ENCODE measurements at regions of chr1 and their contacts with region 1.

Region 1: DNA sequence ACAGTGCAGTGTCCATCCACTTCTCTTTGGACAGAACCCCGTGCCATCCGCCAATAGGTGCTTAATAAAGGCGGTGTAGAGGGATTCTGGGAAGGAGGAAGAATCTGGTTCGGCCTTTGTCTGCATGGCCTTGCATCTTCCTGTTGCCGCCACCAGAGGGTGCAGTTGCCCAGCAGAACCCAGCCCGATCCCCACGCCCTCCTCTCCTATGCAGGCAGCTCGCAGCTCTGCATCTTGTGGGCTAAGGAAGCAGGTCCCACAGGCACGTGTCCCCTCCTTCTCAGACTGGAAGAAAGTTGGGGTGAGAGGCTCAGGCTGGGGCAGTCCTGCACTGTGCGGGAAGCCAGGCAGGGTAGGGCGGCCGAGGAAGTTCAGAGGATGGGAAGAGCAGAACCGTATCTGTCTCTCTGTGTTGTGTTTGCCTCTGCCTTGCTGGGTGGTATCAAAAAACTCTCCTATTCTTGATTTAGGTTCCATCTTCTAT is 20.8 kb downstream of the NAV1 start:
- DNase-seq: peak; percentile 85
- H3K4me3 ChIP-seq: no peak overlapping the region; a peak in 1 of 4 replicates
- H3K27ac ChIP-seq: peak overlapping the region; percentile 51 to 95
- H3K4me1 ChIP-seq: peaks cover 60 to 71% of the 10 kb centered on the region in 2 experiments
- H3K27me3 ChIP-seq: no peaks in the 10 kb centered on the region
- CTCF ChIP-seq: peak; percentile 91
- EP300 ChIP-seq: no peak
- RAD21 ChIP-seq: peak; percentile 99

Region 2: DNA sequence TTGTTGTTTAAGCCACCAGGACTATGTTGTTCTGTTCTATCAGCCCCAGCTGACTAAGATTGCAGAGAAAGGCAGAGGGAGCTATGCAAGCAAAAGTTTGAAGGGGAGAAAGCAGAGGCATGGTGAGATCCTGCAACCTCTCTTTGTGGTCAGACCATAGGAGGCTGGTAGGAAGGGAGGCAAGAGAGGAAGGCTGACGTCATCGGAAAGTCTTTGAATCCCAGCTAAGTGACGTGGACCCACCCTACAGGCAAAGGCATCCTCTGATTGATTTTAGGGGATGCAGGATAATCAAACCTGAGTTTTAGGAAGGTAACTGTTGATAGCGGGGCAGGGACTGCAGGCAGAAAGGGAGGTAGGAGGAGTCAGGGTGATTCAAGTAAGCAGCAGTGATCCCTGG is 114.9 kb before region 1 on chr1:
- CTCF ChIA-PET with region 1: no interaction called
- POLR2A ChIA-PET with region 1: no interaction called
- DNase-seq: no peak
- H3K4me3 ChIP-seq: no peak overlapping the region
- H3K27ac ChIP-seq: no peak overlapping the region
- H3K4me1 ChIP-seq: peaks cover 0 to 7% of the 10 kb centered on the region in 2 experiments; a peak in 2 of 4 replicates
- H3K27me3 ChIP-seq: no peaks in the 10 kb centered on the region
- CTCF ChIP-seq: no peak
- EP300 ChIP-seq: no peak
- RAD21 ChIP-seq: no peak

Region 3: GRCh38 chr1:201530741-201531531 is 28.8 kb before region 1 on chr1:
- CTCF ChIA-PET with region 1: interaction called, 176 read pairs
- POLR2A ChIA-PET with region 1: interaction called, 3 read pairs
- DNase-seq: peak; percentile 89
- H3K4me3 ChIP-seq: no peak overlapping the region
- H3K27ac ChIP-seq: peak overlapping the region in 1 of 2 experiments; percentile 62; a peak in 2 of 4 replicates
- H3K4me1 ChIP-seq: peaks cover 11 to 36% of the 10 kb centered on the region in 2 experiments; a peak in 3 of 4 replicates
- H3K27me3 ChIP-seq: no peaks in the 10 kb centered on the region
- CTCF ChIP-seq: peak; percentile 90
- EP300 ChIP-seq: no peak
- RAD21 ChIP-seq: peak; percentile 93

Region 4: DNA sequence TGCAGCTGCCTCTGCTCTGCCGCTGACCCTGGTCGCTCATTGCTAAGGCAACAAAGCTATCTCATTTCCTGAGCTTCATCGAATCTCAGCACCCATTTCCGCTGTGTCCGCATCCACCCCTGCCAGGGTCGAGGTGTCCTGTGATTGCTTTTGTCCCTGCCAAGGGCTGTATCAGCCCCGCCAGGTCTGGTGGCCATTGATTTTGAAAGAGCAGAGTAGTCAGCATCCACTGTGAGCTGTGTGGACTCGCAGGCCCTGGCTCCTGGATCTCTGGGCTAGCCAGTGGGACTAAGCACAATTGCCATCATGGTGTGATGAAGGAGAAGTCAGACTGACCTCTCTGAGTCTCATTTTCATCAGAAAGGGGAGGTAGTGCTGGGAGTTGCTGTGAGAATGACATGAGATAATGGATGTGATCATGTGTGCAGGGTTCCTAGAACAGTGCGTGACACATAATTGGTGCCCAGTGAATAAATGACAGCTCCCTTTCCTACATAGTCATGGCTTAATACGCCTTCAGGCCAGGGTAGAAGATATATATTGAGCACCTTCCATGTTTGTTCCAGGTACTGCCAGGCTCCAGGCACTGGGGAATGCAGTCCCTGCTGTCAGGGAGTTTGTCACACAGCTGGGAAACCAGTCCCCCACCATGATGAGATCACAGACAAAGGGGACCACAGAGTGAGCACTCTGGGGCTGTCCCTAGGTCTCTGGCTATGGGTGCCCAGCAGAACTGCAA is 11.3 kb after region 1 on chr1:
- CTCF ChIA-PET with region 1: interaction called, 15 read pairs
- POLR2A ChIA-PET with region 1: no interaction called
- DNase-seq: peak; percentile 58
- H3K4me3 ChIP-seq: no peak overlapping the region
- H3K27ac ChIP-seq: peak overlapping the region; percentile 5 to 72; a peak in 3 of 4 replicates
- H3K4me1 ChIP-seq: peaks cover 0 to 34% of the 10 kb centered on the region in 2 experiments; a peak in 2 of 4 replicates
- H3K27me3 ChIP-seq: no peaks in the 10 kb centered on the region
- CTCF ChIP-seq: no peak
- EP300 ChIP-seq: no peak
- RAD21 ChIP-seq: no peak

Region 5: GRCh38 chr1:201649761-201650622 is 90.3 kb after region 1 on chr1:
- CTCF ChIA-PET with region 1: interaction called, 75 read pairs
- POLR2A ChIA-PET with region 1: interaction called, 13 read pairs
- DNase-seq: peak; percentile 85
- H3K4me3 ChIP-seq: peak overlapping the region; percentile 55 to 63
- H3K27ac ChIP-seq: peak overlapping the region; percentile 50 to 85; a peak in 3 of 4 replicates
- H3K4me1 ChIP-seq: peaks cover 48 to 63% of the 10 kb centered on the region in 2 experiments
- H3K27me3 ChIP-seq: no peaks in the 10 kb centered on the region
- CTCF ChIP-seq: no peak
- EP300 ChIP-seq: no peak
- RAD21 ChIP-seq: no peak

Region 6: GRCh38 chr1:201685485-201685884 is 125.8 kb after region 1 on chr1:
- CTCF ChIA-PET with region 1: interaction called, 12 read pairs
- POLR2A ChIA-PET with region 1: no interaction called
- DNase-seq: no peak
- H3K4me3 ChIP-seq: no peak overlapping the region
- H3K27ac ChIP-seq: peak overlapping the region in 1 of 2 experiments; percentile 14; a peak in 1 of 4 replicates
- H3K4me1 ChIP-seq: peaks cover 8 to 24% of the 10 kb centered on the region in 2 experiments; a peak in 3 of 4 replicates
- H3K27me3 ChIP-seq: no peaks in the 10 kb centered on the region
- CTCF ChIP-seq: no peak
- EP300 ChIP-seq: no peak
- RAD21 ChIP-seq: no peak

Region 7: DNA sequence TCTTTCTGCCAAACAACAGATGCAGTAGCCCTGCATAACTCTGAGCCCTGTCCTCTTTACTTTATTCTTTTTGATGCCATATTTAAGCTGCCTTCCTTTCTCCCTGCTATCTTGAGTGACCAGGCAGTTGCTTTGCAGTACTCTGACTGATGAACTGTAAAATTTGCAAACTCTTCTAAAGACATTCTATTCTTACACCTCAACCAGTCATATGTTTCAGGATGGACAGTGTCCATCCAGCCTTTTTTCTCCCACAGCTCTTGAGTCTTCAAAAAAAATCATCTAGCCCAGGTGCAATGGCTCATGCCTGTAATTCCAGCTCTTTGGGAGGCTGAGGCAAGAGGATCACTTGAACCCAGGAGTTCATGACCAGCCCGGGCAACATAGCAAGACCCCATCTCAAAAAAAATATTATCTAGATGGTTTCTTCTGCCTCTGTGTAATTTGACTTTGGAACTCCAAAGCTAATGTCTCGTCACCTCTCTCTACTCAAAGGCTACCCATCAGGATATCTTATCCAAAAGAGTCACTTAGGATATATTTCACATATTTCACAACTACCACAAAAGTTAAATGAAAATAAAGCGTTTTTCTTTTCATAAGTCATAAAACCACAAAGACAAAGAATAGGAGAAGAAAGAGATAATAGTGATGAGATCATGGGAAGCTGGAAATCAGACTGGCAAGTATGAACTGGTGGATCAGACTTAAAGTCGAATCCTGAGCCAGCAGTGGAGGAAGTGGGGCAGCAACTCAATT is 214.7 kb after region 1 on chr1:
- CTCF ChIA-PET with region 1: interaction called, 11 read pairs
- POLR2A ChIA-PET with region 1: no interaction called
- DNase-seq: no peak
- H3K4me3 ChIP-seq: no peak overlapping the region
- H3K27ac ChIP-seq: peak overlapping the region; percentile 70 to 99; a peak in 3 of 4 replicates
- H3K4me1 ChIP-seq: peaks cover 2 to 57% of the 10 kb centered on the region in 2 experiments
- H3K27me3 ChIP-seq: no peaks in the 10 kb centered on the region
- CTCF ChIP-seq: no peak
- EP300 ChIP-seq: peak in 1 of 2 experiments; percentile 87; a peak in 2 of 4 replicates
- RAD21 ChIP-seq: no peak

Measured in SK-N-SH (cell line).